WTC11 (cell line): ENCODE measurements at regions of chr2 and their contacts with region 1.

Region 1: GRCh38 chr2:205947621-205948495 is 138.1 kb downstream of the INO80D start:
- DNase-seq: peak; percentile 73
- ATAC-seq: peak; percentile 78
- H3K4me3 Mint-ChIP-seq: no peak overlapping the region
- H3K27ac Mint-ChIP-seq: no peak overlapping the region
- H3K4me1 Mint-ChIP-seq: peaks cover 23% of the 10 kb centered on the region
- H3K27me3 Mint-ChIP-seq: no peaks in the 10 kb centered on the region
- CTCF ChIP-seq: peak; percentile 77

Region 2: DNA sequence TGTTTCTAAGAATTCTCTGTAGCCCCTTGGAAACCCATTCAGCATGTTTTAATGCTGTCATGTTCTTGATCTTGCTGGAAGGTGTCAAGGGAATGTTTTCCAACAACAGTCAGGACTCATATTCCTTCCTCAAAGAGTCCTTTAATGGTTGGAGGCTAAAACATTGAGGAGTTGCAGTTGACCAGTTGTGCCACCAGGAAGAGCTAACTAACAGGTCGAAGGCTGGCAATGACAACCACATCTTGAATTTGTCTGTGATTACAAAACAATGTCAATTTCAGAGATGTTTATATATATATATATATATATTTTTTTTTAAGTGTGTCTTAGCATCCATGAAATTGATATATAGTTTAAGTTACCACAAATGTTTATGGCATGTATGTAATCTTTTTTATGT is 13.4 kb before region 1 on chr2:
- CTCF ChIA-PET with region 1: interaction called, 28 read pairs
- POLR2A ChIA-PET with region 1: no interaction called
- DNase-seq: no peak
- ATAC-seq: peak; percentile 57
- H3K4me3 Mint-ChIP-seq: no peak overlapping the region
- H3K27ac Mint-ChIP-seq: no peak overlapping the region
- H3K4me1 Mint-ChIP-seq: peaks cover 27% of the 10 kb centered on the region
- H3K27me3 Mint-ChIP-seq: no peaks in the 10 kb centered on the region
- CTCF ChIP-seq: no peak

Region 3: GRCh38 chr2:205972113-205972512 is 24.3 kb after region 1 on chr2:
- CTCF ChIA-PET with region 1: interaction called, 11 read pairs
- POLR2A ChIA-PET with region 1: no interaction called
- DNase-seq: no peak
- ATAC-seq: peak; percentile 43
- H3K4me3 Mint-ChIP-seq: no peak overlapping the region
- H3K27ac Mint-ChIP-seq: no peak overlapping the region
- H3K4me1 Mint-ChIP-seq: peaks cover 13% of the 10 kb centered on the region
- H3K27me3 Mint-ChIP-seq: no peaks in the 10 kb centered on the region
- CTCF ChIP-seq: no peak